ENCODE measurements at regions of chr6 and their contacts with region 1.

Region 1: DNA sequence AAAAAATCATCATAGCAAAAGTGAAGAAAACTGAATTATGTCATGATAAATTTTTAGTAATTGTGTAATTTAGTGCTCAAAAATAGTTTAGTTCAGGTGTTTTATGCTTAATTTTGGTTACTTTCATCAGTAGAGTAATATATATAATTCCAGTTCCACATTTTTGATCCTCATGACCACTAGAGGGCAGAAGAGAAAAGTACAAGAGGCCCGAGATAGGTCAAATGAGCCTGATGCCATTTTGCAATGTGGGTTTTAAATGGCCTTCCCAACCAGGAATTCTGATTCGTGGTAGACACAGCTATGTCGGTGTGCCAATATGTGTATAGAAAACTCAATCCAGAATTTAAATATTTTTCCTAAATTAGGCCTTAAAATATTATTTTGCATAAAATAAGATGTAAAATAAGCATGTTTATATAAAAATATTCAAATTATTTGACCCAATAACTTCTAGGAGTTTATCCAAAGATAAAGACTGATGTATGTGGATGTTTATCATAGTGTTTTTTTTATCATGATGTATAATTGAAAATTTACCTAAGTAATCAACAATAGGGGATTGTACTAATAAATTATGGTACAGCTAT is 159.7 kb upstream of the RPS6KA2 start:
- DNase-seq: peak; percentile 65
- ATAC-seq: peak; percentile 71
- H3K4me3 ChIP-seq: no peak overlapping the region
- H3K27ac ChIP-seq: no peak overlapping the region
- H3K4me1 ChIP-seq: no peaks in the 10 kb centered on the region
- H3K27me3 ChIP-seq: no peaks in the 10 kb centered on the region
- CTCF ChIP-seq: peak; percentile 71
- POLR2A ChIP-seq: no peak
- RAD21 ChIP-seq: peak; percentile 68

Region 2: GRCh38 chr6:166951670-166952060 is 164.9 kb after region 1 on chr6:
- CTCF ChIA-PET with region 1: interaction called, 3 read pairs
- POLR2A ChIA-PET with region 1: no interaction called
- dilution Hi-C with region 1: no loop called
- in situ Hi-C with region 1: no loop called
- intact Hi-C with region 1: loop called (anchors 1 kb)
- DNase-seq: no peak
- ATAC-seq: no peak
- H3K4me3 ChIP-seq: no peak overlapping the region
- H3K27ac ChIP-seq: no peak overlapping the region
- H3K4me1 ChIP-seq: peaks cover 4% of the 10 kb centered on the region; the same call in 1 of the 2 replicates
- H3K27me3 ChIP-seq: no peaks in the 10 kb centered on the region
- CTCF ChIP-seq: no peak
- POLR2A ChIP-seq: no peak
- RAD21 ChIP-seq: no peak

Region 3: GRCh38 chr6:166989427-166990032 is 202.7 kb after region 1 on chr6:
- CTCF ChIA-PET with region 1: interaction called, 14 read pairs
- POLR2A ChIA-PET with region 1: no interaction called
- dilution Hi-C with region 1: no loop called
- in situ Hi-C with region 1: loop called (anchors 5 kb)
- intact Hi-C with region 1: loop called (anchors 1 kb)
- DNase-seq: peak; percentile 49
- ATAC-seq: peak; percentile 79
- H3K4me3 ChIP-seq: no peak overlapping the region
- H3K27ac ChIP-seq: no peak overlapping the region
- H3K4me1 ChIP-seq: no peaks in the 10 kb centered on the region
- H3K27me3 ChIP-seq: no peaks in the 10 kb centered on the region
- CTCF ChIP-seq: peak; percentile 67
- POLR2A ChIP-seq: no peak
- RAD21 ChIP-seq: peak; percentile 72

Region 4: GRCh38 chr6:167141667-167142432 is 355.1 kb after region 1 on chr6:
- CTCF ChIA-PET with region 1: no interaction called
- POLR2A ChIA-PET with region 1: no interaction called
- dilution Hi-C with region 1: no loop called
- in situ Hi-C with region 1: no loop called
- intact Hi-C with region 1: loop called (anchors 5 kb)
- DNase-seq: no peak
- ATAC-seq: no peak
- H3K4me3 ChIP-seq: no peak overlapping the region
- H3K27ac ChIP-seq: no peak overlapping the region
- H3K4me1 ChIP-seq: no peaks in the 10 kb centered on the region
- H3K27me3 ChIP-seq: no peaks in the 10 kb centered on the region
- CTCF ChIP-seq: 0 out of 2 replicates have a peak, but pooled peaks have one; percentile 26
- POLR2A ChIP-seq: no peak
- RAD21 ChIP-seq: peak; percentile 38

Region 5: GRCh38 chr6:167826230-167826895 is 1039.6 kb after region 1 on chr6:
- CTCF ChIA-PET with region 1: no interaction called
- POLR2A ChIA-PET with region 1: no interaction called
- dilution Hi-C with region 1: no loop called
- in situ Hi-C with region 1: no loop called
- intact Hi-C with region 1: no loop called
- DNase-seq: peak; percentile 21
- ATAC-seq: peak; percentile 87
- H3K4me3 ChIP-seq: peak overlapping the region; percentile 100
- H3K27ac ChIP-seq: no peak overlapping the region; the same call in 1 of the 2 replicates
- H3K4me1 ChIP-seq: peaks cover 2% of the 10 kb centered on the region; the same call in 1 of the 2 replicates
- H3K27me3 ChIP-seq: no peaks in the 10 kb centered on the region; the same call in 1 of the 2 replicates
- CTCF ChIP-seq: peak; percentile 40
- POLR2A ChIP-seq: no peak
- RAD21 ChIP-seq: no peak; the same call in 1 of the 2 replicates

Measured in IMR-90 (cell line).